Common myeloid progenitor, CD34-positive (primary cell): ENCODE measurements at regions of chr5 and their contacts with region 1.

Region 1: DNA sequence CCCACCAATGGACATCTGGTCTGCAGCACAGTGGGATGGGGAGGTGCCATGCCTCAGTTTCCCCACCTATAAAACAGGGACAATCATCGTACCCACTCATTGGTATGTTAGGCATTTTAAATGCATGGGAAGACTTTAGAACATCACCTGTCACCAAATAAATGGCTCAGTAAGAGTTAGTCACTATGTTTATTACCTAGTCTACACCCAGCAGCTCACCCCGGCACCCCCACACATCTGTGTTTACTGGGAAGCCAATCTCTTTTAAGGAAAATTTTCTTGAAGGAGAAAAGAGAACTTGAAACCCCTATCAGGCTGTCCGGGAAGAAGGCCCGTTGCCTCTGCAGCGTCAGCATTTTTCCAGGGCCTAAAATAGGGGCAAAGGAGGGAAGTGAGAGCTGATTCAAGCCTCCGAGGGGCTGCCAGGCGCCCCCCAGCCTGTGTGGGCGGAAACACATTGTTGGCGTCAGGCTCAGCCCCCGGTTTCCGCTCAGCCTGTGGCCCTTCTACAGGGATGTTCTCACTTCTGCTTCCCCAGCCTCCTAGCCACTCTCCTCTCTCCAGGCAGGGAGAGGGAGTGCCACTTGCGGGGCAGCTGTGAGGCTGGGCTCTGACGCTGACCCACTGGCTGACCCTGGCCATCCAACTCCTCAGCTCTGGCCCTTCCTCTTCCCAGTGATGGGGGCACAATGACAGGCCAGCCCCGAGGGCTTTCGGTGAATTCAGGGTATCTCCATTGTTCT is 4.6 kb downstream of the CSF1R start:
- DNase-seq: peak; percentile 87 to 97 (median 96)
- H3K4me3 ChIP-seq: peak overlapping the region in 4 of 7 experiments; percentile 3 to 48 (median 36)
- H3K27ac ChIP-seq: peak overlapping the region; percentile 46 to 72
- H3K4me1 ChIP-seq: peaks cover 21 to 82% (median 62%) of the 10 kb centered on the region in 4 experiments
- H3K27me3 ChIP-seq: no peaks in the 10 kb centered on the region

Region 2: DNA sequence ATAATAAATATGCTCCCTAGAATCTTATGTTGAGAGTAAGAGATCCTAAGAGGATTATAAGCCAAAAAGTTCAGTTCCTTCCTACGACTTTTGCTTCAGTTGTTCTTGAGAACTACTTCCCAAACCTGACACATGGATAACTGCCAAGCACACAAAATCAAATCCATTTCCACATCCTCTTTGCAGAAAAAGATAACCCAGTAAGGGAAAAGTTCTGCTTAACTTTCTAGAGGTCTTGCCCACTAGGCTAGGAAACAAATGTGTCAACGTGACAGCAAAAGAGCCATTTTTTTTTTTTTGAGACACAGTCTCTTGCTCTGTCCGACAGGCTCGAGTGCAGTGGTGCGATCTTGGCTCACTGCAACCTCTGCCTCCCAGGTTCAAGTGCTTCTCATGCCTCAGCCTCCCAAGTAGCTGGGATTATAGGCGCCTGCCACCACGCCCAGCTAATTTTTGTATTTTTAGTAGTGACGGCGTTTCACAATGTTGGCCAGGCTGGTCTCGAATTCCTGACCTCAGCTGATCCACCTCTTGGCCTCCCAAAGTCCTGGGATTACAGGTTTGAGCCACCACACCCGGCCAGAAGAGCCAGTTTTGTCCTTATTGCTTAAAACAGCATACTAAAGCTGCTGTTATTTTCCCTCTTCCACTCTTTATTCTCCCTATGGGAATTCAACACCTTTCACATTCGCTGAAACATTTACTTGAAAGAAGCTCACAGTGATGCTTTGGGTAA is 554.7 kb before region 1 on chr5:
- CTCF ChIA-PET with region 1: no interaction called
- POLR2A ChIA-PET with region 1: no interaction called
- DNase-seq: peak in 2 of 3 donors; percentile 23 to 32
- H3K4me3 ChIP-seq: peak overlapping the region in 1 of 7 experiments; percentile 33
- H3K27ac ChIP-seq: no peak overlapping the region
- H3K4me1 ChIP-seq: peaks cover 8 to 26% (median 19%) of the 10 kb centered on the region in 4 experiments
- H3K27me3 ChIP-seq: no peaks in the 10 kb centered on the region

Region 3: DNA sequence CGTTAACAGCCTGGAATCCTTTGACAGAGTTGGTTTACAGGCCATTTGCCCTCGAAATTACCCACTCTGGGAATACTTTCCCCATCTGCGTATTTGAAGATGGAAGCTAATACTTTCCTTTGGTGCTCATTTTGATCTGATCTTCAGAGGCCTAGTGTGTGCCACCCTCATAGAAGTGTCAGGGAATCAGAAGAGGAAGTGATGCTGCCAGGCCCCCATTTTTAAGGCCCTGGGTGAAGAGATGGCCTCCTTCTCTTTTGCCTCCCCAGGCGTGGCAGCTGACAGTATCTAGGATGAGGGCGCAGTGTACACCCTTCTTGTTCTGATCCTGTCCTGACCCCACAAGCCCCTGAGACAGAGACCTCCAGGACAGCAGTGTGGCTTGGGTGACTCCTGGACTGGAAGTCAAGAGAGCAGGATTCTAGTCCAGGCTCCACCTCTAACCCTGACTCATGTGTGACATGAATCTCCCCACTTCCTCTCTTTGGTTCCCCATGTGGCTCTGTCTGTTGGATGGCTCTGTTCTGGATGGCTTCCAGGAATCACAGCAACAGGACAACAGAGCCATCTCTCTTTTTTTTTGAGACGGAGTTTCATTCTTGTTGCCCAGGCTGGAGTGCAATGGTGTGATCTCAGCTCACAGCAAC is 23.1 kb before region 1 on chr5:
- CTCF ChIA-PET with region 1: interaction called, 11 read pairs
- POLR2A ChIA-PET with region 1: no interaction called
- DNase-seq: peak; percentile 49 to 85 (median 85)
- H3K4me3 ChIP-seq: no peak overlapping the region
- H3K27ac ChIP-seq: no peak overlapping the region
- H3K4me1 ChIP-seq: peaks cover 0 to 45% (median 31%) of the 10 kb centered on the region in 4 experiments
- H3K27me3 ChIP-seq: no peaks in the 10 kb centered on the region

Region 4: DNA sequence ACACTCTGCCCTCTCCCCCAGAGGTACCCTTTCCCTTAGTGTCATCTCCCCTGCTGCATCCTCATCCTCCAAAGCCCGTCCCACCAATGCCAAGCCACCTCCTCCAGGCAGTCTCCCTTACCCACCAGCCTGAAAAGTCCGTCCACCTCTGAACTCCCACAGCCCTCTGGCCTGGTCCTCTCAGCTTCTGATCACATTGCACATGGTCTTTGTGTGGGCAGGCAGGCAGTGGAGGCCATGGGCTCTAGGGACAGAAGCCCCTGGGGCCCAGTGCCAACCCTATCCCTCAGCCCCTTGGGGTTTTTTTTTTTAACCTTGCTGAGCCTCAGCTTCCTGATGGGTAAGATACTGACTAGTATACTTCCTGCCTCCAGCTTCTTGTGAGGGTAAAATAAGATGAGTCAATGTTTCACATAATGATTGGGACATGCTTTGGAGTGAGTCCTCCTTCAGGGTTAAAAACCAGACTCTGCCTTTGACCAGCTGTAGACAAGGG is 14.8 kb before region 1 on chr5:
- CTCF ChIA-PET with region 1: interaction called, 18 read pairs
- POLR2A ChIA-PET with region 1: interaction called, 5 read pairs
- DNase-seq: peak in 2 of 3 donors; percentile 57 to 58
- H3K4me3 ChIP-seq: peak overlapping the region in 1 of 7 experiments; percentile 10
- H3K27ac ChIP-seq: no peak overlapping the region
- H3K4me1 ChIP-seq: peaks cover 0 to 85% (median 72%) of the 10 kb centered on the region in 4 experiments
- H3K27me3 ChIP-seq: no peaks in the 10 kb centered on the region